ENCODE measurements at regions of chr6 and their contacts with region 1.

Region 1: DNA sequence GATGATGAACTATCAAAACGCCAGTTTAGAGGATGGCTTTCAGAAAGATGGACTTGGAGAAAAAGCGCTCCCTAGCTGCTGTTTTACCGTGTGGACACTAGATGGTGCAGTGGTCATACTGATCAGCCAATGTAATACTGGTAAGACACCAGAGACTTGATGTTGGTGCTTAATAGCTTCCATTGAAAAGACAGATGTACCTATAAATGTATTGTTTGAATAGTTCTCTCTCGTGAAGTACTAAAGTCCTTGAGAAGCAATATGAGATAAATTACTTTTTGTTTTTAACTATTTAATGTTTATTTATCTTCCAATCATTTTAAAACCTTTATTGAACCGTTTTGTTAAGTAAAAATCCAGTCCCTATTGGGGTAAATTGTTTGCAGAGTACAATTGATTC is 63.9 kb upstream of the FUCA2 start:
- DNase-seq: peak; percentile 78
- H3K4me3 ChIP-seq: no peak overlapping the region
- H3K27ac ChIP-seq: no peak overlapping the region
- H3K4me1 ChIP-seq: peaks cover 12% of the 10 kb centered on the region
- H3K27me3 ChIP-seq: no peaks in the 10 kb centered on the region
- CTCF ChIP-seq: peak; percentile 61 to 71
- POLR2A ChIP-seq: no peak

Region 2: GRCh38 chr6:142474531-142475289 is 1100.7 kb before region 1 on chr6:
- CTCF ChIA-PET with region 1: interaction called, 18 read pairs
- POLR2A ChIA-PET with region 1: no interaction called
- dilution Hi-C with region 1: no loop called
- intact Hi-C with region 1: no loop called
- DNase-seq: peak; percentile 71
- H3K4me3 ChIP-seq: no peak overlapping the region
- H3K27ac ChIP-seq: peak overlapping the region; percentile 1
- H3K4me1 ChIP-seq: peaks cover 2% of the 10 kb centered on the region
- H3K27me3 ChIP-seq: peaks cover 0 to 2% of the 10 kb centered on the region in 2 experiments
- CTCF ChIP-seq: peak; percentile 41 to 43
- POLR2A ChIP-seq: no peak

Region 3: GRCh38 chr6:143525356-143525755 is 50.1 kb before region 1 on chr6:
- CTCF ChIA-PET with region 1: no interaction called
- POLR2A ChIA-PET with region 1: no interaction called
- dilution Hi-C with region 1: no loop called
- intact Hi-C with region 1: no loop called
- DNase-seq: no peak
- H3K4me3 ChIP-seq: no peak overlapping the region
- H3K27ac ChIP-seq: no peak overlapping the region
- H3K4me1 ChIP-seq: no peaks in the 10 kb centered on the region
- H3K27me3 ChIP-seq: peaks cover 0 to 12% of the 10 kb centered on the region in 2 experiments
- CTCF ChIP-seq: no peak
- POLR2A ChIP-seq: no peak

Region 4: GRCh38 chr6:143695130-143695968 is 119.9 kb after region 1 on chr6:
- CTCF ChIA-PET with region 1: interaction called, 12 read pairs
- POLR2A ChIA-PET with region 1: interaction called, 3 read pairs
- dilution Hi-C with region 1: no loop called
- intact Hi-C with region 1: loop called (anchors 1 kb)
- DNase-seq: peak; percentile 49
- H3K4me3 ChIP-seq: no peak overlapping the region
- H3K27ac ChIP-seq: peak overlapping the region; percentile 0
- H3K4me1 ChIP-seq: peaks cover 53% of the 10 kb centered on the region
- H3K27me3 ChIP-seq: no peaks in the 10 kb centered on the region
- CTCF ChIP-seq: no peak
- POLR2A ChIP-seq: no peak

Region 5: GRCh38 chr6:143707697-143708096 is 132.3 kb after region 1 on chr6:
- CTCF ChIA-PET with region 1: no interaction called
- POLR2A ChIA-PET with region 1: no interaction called
- dilution Hi-C with region 1: no loop called
- intact Hi-C with region 1: no loop called
- DNase-seq: no peak
- H3K4me3 ChIP-seq: no peak overlapping the region
- H3K27ac ChIP-seq: no peak overlapping the region
- H3K4me1 ChIP-seq: no peaks in the 10 kb centered on the region
- H3K27me3 ChIP-seq: no peaks in the 10 kb centered on the region
- CTCF ChIP-seq: no peak
- POLR2A ChIP-seq: no peak

Region 6: GRCh38 chr6:143792402-143793279 is 217.2 kb after region 1 on chr6:
- CTCF ChIA-PET with region 1: interaction called, 11 read pairs
- POLR2A ChIA-PET with region 1: no interaction called
- dilution Hi-C with region 1: no loop called
- intact Hi-C with region 1: no loop called
- DNase-seq: no peak
- H3K4me3 ChIP-seq: no peak overlapping the region
- H3K27ac ChIP-seq: no peak overlapping the region
- H3K4me1 ChIP-seq: no peaks in the 10 kb centered on the region
- H3K27me3 ChIP-seq: no peaks in the 10 kb centered on the region
- CTCF ChIP-seq: no peak
- POLR2A ChIP-seq: no peak

Region 7: DNA sequence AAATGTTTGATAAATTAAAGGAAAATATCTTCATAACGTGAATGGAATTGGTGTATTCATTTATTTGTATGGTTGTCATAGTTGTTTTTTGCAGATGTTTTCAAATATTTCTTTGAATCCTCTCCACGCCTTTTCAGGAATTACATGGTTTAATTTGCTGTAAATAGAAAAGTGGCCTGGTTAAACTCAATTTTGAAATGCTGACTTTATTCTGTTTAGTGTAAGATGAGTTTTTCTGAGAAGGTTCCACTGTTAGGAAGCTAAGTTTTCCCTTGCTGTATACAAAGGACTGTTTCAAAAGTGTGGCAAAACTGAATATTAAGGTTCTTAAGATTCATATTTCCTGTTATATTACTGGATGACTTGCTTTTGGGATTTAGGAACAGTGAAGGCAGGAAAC is 288.3 kb after region 1 on chr6:
- CTCF ChIA-PET with region 1: interaction called, 13 read pairs
- POLR2A ChIA-PET with region 1: no interaction called
- dilution Hi-C with region 1: no loop called
- intact Hi-C with region 1: no loop called
- DNase-seq: no peak
- H3K4me3 ChIP-seq: no peak overlapping the region
- H3K27ac ChIP-seq: no peak overlapping the region
- H3K4me1 ChIP-seq: no peaks in the 10 kb centered on the region
- H3K27me3 ChIP-seq: peaks cover 0 to 1% of the 10 kb centered on the region in 2 experiments
- CTCF ChIP-seq: no peak
- POLR2A ChIP-seq: no peak

Region 8: GRCh38 chr6:144008120-144008811 is 432.8 kb after region 1 on chr6 and contains the start of gene PLAGL1:
- CTCF ChIA-PET with region 1: interaction called, 264 read pairs
- POLR2A ChIA-PET with region 1: interaction called, 3 read pairs
- dilution Hi-C with region 1: no loop called
- intact Hi-C with region 1: loop called (anchors 1 kb)
- DNase-seq: peak; percentile 57
- H3K4me3 ChIP-seq: peak within 1 kb of the TSS; percentile 63 to 90 (median 66)
- H3K27ac ChIP-seq: peak within 1 kb of the TSS; percentile 8
- H3K4me1 ChIP-seq: peaks cover 3% of the 10 kb centered on the region
- H3K27me3 ChIP-seq: peaks cover 4 to 5% of the 10 kb centered on the region in 2 experiments
- CTCF ChIP-seq: no peak
- POLR2A ChIP-seq: peak; percentile 72
- total RNA-seq, gene PLAGL1: 40.0 and 40.4 TPM in 2 replicates

Region 9: DNA sequence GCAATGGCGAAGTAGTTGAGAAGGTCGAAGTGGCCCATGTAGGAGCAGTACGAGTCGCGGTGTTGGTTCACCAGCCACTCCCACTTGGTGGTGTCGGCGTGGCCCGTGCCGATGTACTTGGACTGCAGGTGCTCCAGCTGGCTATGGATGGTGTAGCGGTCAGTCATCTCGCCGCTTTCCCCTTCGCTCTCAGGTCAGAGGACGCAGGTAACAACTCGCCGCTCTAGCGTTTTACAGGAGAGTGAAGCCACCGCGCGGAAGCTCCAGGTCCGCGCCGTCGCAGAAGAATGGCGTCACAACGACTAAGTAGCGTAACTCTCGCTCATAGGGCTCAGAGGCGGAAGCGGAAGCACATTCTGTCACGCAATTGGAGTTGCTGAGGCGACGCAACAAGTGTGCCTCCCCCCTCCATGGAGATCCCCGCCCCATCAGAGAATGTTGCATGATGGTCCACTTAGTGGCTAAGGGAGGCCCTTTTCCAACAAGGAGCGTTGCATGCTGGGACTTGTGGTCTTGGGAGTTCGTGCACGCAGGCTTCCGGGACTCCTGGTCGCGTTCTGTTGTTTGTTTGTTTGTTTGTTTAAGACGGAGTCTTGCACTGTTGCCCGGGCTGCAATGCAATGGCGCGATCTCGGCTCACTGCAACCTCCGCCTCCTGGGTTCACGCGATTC is 520.0 kb after region 1 on chr6 and contains the start of gene SF3B5:
- CTCF ChIA-PET with region 1: interaction called, 22 read pairs
- POLR2A ChIA-PET with region 1: no interaction called
- dilution Hi-C with region 1: no loop called
- intact Hi-C with region 1: loop called (anchors 2 kb)
- DNase-seq: peak; percentile 100
- H3K4me3 ChIP-seq: peak within 1 kb of the TSS; percentile 44 to 74 (median 67)
- H3K27ac ChIP-seq: peak within 1 kb of the TSS; percentile 30
- H3K4me1 ChIP-seq: peaks cover 13% of the 10 kb centered on the region
- H3K27me3 ChIP-seq: peaks cover 0 to 9% of the 10 kb centered on the region in 2 experiments
- CTCF ChIP-seq: no peak
- POLR2A ChIP-seq: peak; percentile 92
- total RNA-seq, gene SF3B5: 170 and 185 TPM in 2 replicates

Measured in endothelial cell of umbilical vein (primary cell).